HepG2 (cell line): ENCODE measurements at regions of chr10 and their contacts with region 1.

Region 1: GRCh38 chr10:52951824-52952223 is 179.2 kb upstream of the MBL2 start:
- DNase-seq: peak; percentile 59
- ATAC-seq: peak; percentile 89
- H3K4me3 ChIP-seq: no peak overlapping the region
- H3K27ac ChIP-seq: no peak overlapping the region
- H3K4me1 ChIP-seq: peaks cover 10% of the 10 kb centered on the region
- H3K27me3 ChIP-seq: peaks cover 0 to 7% of the 10 kb centered on the region in 2 experiments; a peak in 2 of 5 replicates
- CTCF ChIP-seq: peak; percentile 89
- EP300 ChIP-seq: no peak
- POLR2A ChIP-seq: no peak
- RAD21 ChIP-seq: peak; percentile 62

Region 2: DNA sequence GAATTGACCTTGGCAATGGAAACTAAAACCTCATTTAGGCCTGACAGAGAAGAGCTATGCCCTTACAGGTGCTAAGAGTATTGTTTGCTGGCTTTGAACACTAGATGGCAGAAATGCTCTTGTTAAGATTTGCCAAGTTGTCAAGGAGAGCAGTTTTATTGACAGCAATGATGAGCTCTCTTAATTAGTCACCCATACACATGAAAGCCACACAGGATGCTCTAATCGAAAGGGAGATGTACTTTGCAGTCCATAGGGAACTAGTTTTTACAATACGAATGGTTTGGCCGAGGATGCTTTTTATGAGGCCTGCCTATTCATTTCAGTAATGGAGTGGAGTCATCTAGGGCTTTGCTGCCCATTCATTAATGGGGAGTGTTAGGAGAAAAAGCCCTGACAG is 133.8 kb before region 1 on chr10:
- CTCF ChIA-PET with region 1: no interaction called
- POLR2A ChIA-PET with region 1: no interaction called
- in situ Hi-C with region 1: no loop called
- intact Hi-C with region 1: loop called (anchors 2 kb)
- DNase-seq: peak; percentile 51
- ATAC-seq: peak; percentile 85
- H3K4me3 ChIP-seq: no peak overlapping the region
- H3K27ac ChIP-seq: no peak overlapping the region
- H3K4me1 ChIP-seq: no peaks in the 10 kb centered on the region
- H3K27me3 ChIP-seq: no peaks in the 10 kb centered on the region
- CTCF ChIP-seq: peak; percentile 70
- EP300 ChIP-seq: no peak
- POLR2A ChIP-seq: no peak
- RAD21 ChIP-seq: no peak

Region 3: GRCh38 chr10:52906046-52906445 is 45.8 kb before region 1 on chr10:
- CTCF ChIA-PET with region 1: no interaction called
- POLR2A ChIA-PET with region 1: no interaction called
- in situ Hi-C with region 1: no loop called
- intact Hi-C with region 1: no loop called
- DNase-seq: no peak
- ATAC-seq: no peak
- H3K4me3 ChIP-seq: no peak overlapping the region
- H3K27ac ChIP-seq: no peak overlapping the region
- H3K4me1 ChIP-seq: no peaks in the 10 kb centered on the region
- H3K27me3 ChIP-seq: no peaks in the 10 kb centered on the region
- CTCF ChIP-seq: no peak
- EP300 ChIP-seq: no peak
- POLR2A ChIP-seq: no peak
- RAD21 ChIP-seq: no peak

Region 4: DNA sequence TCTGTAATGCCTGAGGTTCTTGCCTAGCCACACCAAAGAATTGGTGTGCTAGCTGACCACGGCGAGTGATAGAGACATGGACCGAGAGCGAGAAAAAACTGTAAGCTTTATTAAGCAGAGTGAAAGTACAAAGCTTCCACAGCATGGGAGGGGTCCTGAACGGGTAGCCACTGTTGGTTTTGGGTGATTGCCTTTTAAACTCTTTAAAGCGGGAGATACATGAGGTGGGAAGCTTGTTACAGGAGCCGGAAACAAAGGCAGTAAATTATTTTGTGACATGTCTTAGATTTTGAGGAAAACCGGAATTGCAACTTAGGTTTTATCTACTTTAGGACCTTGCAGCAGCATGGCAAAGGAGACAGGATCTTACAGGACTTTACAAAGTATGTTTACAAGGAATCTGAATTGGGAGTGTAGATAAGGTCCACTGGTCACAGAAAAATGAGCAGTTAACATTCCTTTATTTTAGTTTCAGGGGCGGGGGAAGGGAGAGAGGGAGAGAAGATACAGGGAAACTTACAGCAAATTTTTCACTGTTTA is 73.4 kb after region 1 on chr10:
- CTCF ChIA-PET with region 1: no interaction called
- POLR2A ChIA-PET with region 1: no interaction called
- in situ Hi-C with region 1: no loop called
- intact Hi-C with region 1: loop called (anchors 5 kb)
- DNase-seq: peak; percentile 12
- ATAC-seq: peak; percentile 71
- H3K4me3 ChIP-seq: peak overlapping the region; percentile 40 to 55 (median 42); a peak in 4 of 6 replicates
- H3K27ac ChIP-seq: peak overlapping the region; percentile 42
- H3K4me1 ChIP-seq: peaks cover 27% of the 10 kb centered on the region
- H3K27me3 ChIP-seq: no peaks in the 10 kb centered on the region
- CTCF ChIP-seq: no peak
- EP300 ChIP-seq: peak in 1 of 2 experiments; percentile 46; a peak in 1 of 4 replicates
- POLR2A ChIP-seq: no peak
- RAD21 ChIP-seq: no peak

Region 5: DNA sequence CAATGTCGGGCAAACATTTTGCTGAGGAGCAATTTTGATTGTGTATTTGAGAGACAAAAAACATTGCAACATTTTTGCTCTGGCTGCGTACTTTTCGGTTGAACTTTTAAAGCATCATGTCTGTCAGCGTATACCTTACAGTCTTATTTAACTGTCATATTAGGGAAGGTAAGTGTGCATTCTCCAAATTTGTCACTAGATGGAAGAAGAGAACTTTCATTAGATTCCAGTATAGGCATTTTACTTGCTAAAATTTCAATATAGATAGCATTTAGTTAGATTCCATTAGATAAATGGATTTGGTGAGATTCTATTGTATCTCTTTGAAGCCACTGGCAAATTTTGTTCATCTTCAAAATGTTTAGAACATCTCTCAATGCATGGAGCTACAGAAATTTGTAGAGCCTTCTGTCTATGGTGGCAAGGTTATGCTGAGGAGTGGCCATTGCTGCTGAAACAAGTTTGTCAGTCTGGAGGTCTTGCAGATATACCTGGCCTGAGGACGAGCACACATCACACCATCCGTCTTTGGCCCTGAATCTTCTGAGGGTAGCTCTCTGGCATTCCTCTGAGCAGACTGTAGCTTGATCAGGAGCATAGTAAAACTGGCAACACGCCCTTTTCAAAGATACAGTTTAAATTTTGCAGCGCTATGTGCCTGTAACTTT is 258.3 kb after region 1 on chr10:
- CTCF ChIA-PET with region 1: no interaction called
- POLR2A ChIA-PET with region 1: no interaction called
- in situ Hi-C with region 1: no loop called
- intact Hi-C with region 1: loop called (anchors 2 kb)
- DNase-seq: peak; percentile 14
- ATAC-seq: peak; percentile 71
- H3K4me3 ChIP-seq: no peak overlapping the region
- H3K27ac ChIP-seq: no peak overlapping the region
- H3K4me1 ChIP-seq: no peaks in the 10 kb centered on the region
- H3K27me3 ChIP-seq: no peaks in the 10 kb centered on the region
- CTCF ChIP-seq: peak; percentile 37
- EP300 ChIP-seq: no peak
- POLR2A ChIP-seq: no peak
- RAD21 ChIP-seq: no peak

Region 6: GRCh38 chr10:53601260-53601875 is 649.5 kb after region 1 on chr10:
- CTCF ChIA-PET with region 1: no interaction called
- POLR2A ChIA-PET with region 1: no interaction called
- in situ Hi-C with region 1: no loop called
- intact Hi-C with region 1: loop called (anchors 2 kb)
- DNase-seq: peak; percentile 11
- ATAC-seq: peak; percentile 77
- H3K4me3 ChIP-seq: no peak overlapping the region
- H3K27ac ChIP-seq: no peak overlapping the region
- H3K4me1 ChIP-seq: no peaks in the 10 kb centered on the region
- H3K27me3 ChIP-seq: no peaks in the 10 kb centered on the region
- CTCF ChIP-seq: peak; percentile 71
- EP300 ChIP-seq: no peak
- POLR2A ChIP-seq: no peak
- RAD21 ChIP-seq: no peak